Natural killer cell (primary cell): ENCODE measurements at regions of chr7 and their contacts with region 1.

Region 1: GRCh38 chr7:75072978-75073282 is 672 bp downstream of the RCC1L start:
- DNase-seq: no peak
- ATAC-seq: no peak
- H3K4me3 ChIP-seq: peak overlapping the region; percentile 89
- H3K4me3 Mint-ChIP-seq: peak overlapping the region; percentile 96
- H3K27ac ChIP-seq: peak overlapping the region; percentile 91
- H3K27ac Mint-ChIP-seq: peak overlapping the region; percentile 91 to 94
- H3K4me1 ChIP-seq: peaks cover 13% of the 10 kb centered on the region
- H3K4me1 Mint-ChIP-seq: peaks cover 3 to 16% of the 10 kb centered on the region in 2 donors
- H3K27me3 ChIP-seq: no peaks in the 10 kb centered on the region
- H3K27me3 Mint-ChIP-seq: no peaks in the 10 kb centered on the region
- CTCF ChIP-seq: no peak

Region 2: DNA sequence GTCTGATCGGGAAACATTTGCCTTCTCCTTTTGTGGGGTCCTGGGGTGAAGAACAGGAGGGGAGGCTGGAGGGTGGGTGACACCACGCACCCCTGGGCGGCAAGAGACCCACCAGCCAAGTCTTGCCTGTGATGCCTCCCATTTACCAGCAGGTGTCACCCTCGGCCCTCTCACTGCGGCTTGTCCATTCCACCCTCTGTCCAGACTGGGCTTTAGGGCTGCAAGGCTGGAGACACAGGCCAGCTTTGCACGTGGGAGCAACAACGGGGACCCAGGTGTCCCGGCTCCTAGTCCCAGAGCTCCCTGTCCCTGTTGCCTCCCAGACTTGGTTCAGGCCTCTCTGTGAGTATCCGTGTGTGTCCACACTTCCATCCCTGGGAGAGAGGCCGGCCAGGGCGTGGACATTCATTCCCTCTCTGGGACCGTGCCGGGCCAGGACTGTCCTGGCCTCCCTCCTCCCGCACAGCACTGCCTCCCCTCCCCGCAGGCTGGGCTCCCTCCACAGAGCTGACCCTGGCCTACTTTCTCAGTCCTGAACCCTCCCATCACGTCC is 655.4 kb before region 1 on chr7:
- intact Hi-C with region 1: loop called (anchors 10 kb)
- DNase-seq: peak; percentile 47 to 76
- ATAC-seq: peak; percentile 69 to 88 (median 80)
- H3K4me3 ChIP-seq: no peak overlapping the region
- H3K4me3 Mint-ChIP-seq: no peak overlapping the region
- H3K27ac ChIP-seq: no peak overlapping the region
- H3K27ac Mint-ChIP-seq: no peak overlapping the region
- H3K4me1 ChIP-seq: no peaks in the 10 kb centered on the region
- H3K4me1 Mint-ChIP-seq: peaks cover 0 to 10% of the 10 kb centered on the region in 2 donors
- H3K27me3 ChIP-seq: no peaks in the 10 kb centered on the region
- H3K27me3 Mint-ChIP-seq: peaks cover 3 to 7% of the 10 kb centered on the region in 2 donors
- CTCF ChIP-seq: peak; percentile 97

Region 3: GRCh38 chr7:75555736-75556135 is 482.8 kb after region 1 on chr7:
- intact Hi-C with region 1: no loop called
- DNase-seq: no peak
- ATAC-seq: no peak
- H3K4me3 ChIP-seq: no peak overlapping the region
- H3K4me3 Mint-ChIP-seq: no peak overlapping the region
- H3K27ac ChIP-seq: no peak overlapping the region
- H3K27ac Mint-ChIP-seq: no peak overlapping the region
- H3K4me1 ChIP-seq: no peaks in the 10 kb centered on the region
- H3K4me1 Mint-ChIP-seq: no peaks in the 10 kb centered on the region
- H3K27me3 ChIP-seq: no peaks in the 10 kb centered on the region
- H3K27me3 Mint-ChIP-seq: no peaks in the 10 kb centered on the region
- CTCF ChIP-seq: no peak

Region 4: DNA sequence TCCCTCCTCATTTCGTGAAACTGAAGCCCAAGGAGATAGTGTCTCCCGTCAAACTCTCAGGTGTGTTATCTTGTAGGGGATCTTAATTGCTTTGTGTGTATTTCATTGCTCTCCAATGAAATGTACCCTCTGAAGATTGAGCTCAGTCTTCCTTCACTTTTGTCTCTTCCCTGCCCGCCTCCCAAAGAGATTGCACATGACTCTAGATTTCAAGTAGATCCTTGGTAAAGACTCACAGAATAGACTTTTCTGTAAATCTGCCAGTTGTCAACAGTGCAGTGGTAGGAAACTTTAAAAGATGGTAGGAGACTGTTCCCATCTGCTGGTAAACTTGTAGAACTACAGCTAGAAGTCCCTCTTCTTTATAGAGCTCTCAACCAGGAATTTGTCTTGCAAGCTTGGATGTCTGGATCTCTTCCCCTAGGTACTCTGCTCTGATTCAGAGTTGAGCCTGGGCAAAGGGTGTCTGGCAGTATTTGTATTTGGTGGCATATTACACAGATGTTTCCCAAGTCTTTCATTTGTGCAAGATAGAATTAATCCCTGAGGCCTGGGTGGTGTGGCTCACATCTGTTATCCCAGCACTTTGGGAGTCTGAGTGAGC is 689.5 kb after region 1 on chr7:
- intact Hi-C with region 1: loop called (anchors 5 kb)
- DNase-seq: peak in 1 of 2 donors; percentile 71
- ATAC-seq: peak; percentile 87 to 99 (median 99)
- H3K4me3 ChIP-seq: no peak overlapping the region
- H3K4me3 Mint-ChIP-seq: no peak overlapping the region
- H3K27ac ChIP-seq: no peak overlapping the region
- H3K27ac Mint-ChIP-seq: no peak overlapping the region
- H3K4me1 ChIP-seq: peaks cover 5% of the 10 kb centered on the region
- H3K4me1 Mint-ChIP-seq: peaks cover 6 to 8% of the 10 kb centered on the region in 2 donors
- H3K27me3 ChIP-seq: no peaks in the 10 kb centered on the region
- H3K27me3 Mint-ChIP-seq: peaks cover 0 to 3% of the 10 kb centered on the region in 2 donors
- CTCF ChIP-seq: peak; percentile 69